K562 (cell line): ENCODE measurements at regions of chr4 and their contacts with region 1.

Region 1: DNA sequence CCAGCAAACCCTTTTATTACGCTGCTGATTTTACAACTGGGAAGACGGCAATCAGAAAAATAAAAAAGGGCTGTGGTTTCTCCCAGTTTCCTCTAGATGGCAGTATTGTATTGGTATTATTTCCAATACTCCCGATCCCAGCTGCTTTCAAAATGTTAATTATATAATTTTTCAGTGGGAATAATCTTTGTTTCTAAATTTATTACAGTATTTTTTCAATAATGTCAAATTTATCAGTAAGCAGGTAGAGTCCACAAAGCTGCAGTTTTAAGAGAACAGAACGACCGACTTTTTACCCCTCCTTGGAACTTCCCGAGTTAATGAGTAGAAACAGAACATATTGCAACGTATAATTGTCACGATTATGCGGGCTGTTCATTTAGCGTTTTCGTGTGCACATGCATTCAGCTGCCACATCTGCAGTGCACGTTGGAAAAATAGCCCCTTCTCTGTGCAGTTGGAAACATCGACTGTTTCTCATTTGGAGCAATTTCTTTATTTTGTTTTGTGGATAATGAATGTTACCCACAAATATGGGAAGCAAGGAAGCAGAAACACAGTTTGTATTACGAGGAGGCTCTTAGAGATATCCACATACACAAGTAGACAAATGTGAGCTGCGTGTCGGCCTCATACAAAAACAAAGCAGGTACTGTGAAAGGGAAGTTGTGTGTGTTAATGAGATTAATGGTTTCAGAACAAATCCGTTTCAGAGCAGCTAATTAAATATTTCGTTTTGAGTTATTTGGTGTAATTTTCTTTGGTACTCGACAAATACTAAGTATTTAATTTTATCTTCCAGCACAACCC is 188.0 kb downstream of the STIM2 start:
- DNase-seq: peak; percentile 31 to 65 (median 40)
- ATAC-seq: peak; percentile 63; the same call in 2 of the 3 replicates
- H3K4me3 ChIP-seq: no peak overlapping the region
- H3K27ac ChIP-seq: no peak overlapping the region
- H3K4me1 ChIP-seq: no peaks in the 10 kb centered on the region
- H3K27me3 ChIP-seq: peaks cover 17 to 33% of the 10 kb centered on the region in 2 experiments
- CTCF ChIP-seq: peak; percentile 30 to 77 (median 51); a peak in 5 of 6 replicates
- EP300 ChIP-seq: no peak
- POLR2A ChIP-seq: no peak
- RAD21 ChIP-seq: peak; percentile 77 to 78

Region 2: GRCh38 chr4:27084685-27085361 is 36.2 kb after region 1 on chr4:
- CTCF ChIA-PET with region 1: no interaction called
- POLR2A ChIA-PET with region 1: no interaction called
- in situ Hi-C with region 1: no loop called
- intact Hi-C with region 1: loop called (anchors 1 kb)
- DNase-seq: peak; percentile 56 to 70 (median 62)
- ATAC-seq: peak; percentile 85
- H3K4me3 ChIP-seq: no peak overlapping the region
- H3K27ac ChIP-seq: no peak overlapping the region
- H3K4me1 ChIP-seq: peaks cover 3 to 9% of the 10 kb centered on the region in 2 experiments; a peak in 3 of 5 replicates
- H3K27me3 ChIP-seq: peaks cover 0 to 5% of the 10 kb centered on the region in 2 experiments; a peak in 1 of 5 replicates
- CTCF ChIP-seq: peak; percentile 55
- EP300 ChIP-seq: peak; percentile 72
- POLR2A ChIP-seq: no peak
- RAD21 ChIP-seq: peak; percentile 43 to 70; a peak in 3 of 4 replicates

Region 3: GRCh38 chr4:27318743-27319142 is 270.1 kb after region 1 on chr4:
- CTCF ChIA-PET with region 1: interaction called, 3 read pairs
- POLR2A ChIA-PET with region 1: no interaction called
- in situ Hi-C with region 1: no loop called
- intact Hi-C with region 1: loop called (anchors 2 kb)
- DNase-seq: peak in 3 of 4 experiments; percentile 10 to 45 (median 42)
- ATAC-seq: peak; percentile 76
- H3K4me3 ChIP-seq: no peak overlapping the region
- H3K27ac ChIP-seq: no peak overlapping the region
- H3K4me1 ChIP-seq: no peaks in the 10 kb centered on the region
- H3K27me3 ChIP-seq: no peaks in the 10 kb centered on the region
- CTCF ChIP-seq: peak; percentile 47 to 51 (median 49)
- EP300 ChIP-seq: no peak
- POLR2A ChIP-seq: no peak
- RAD21 ChIP-seq: peak; percentile 44 to 64